Aorta (tissue), 5 donors: ENCODE measurements at regions of chr6 and their contacts with region 1.

Region 1: DNA sequence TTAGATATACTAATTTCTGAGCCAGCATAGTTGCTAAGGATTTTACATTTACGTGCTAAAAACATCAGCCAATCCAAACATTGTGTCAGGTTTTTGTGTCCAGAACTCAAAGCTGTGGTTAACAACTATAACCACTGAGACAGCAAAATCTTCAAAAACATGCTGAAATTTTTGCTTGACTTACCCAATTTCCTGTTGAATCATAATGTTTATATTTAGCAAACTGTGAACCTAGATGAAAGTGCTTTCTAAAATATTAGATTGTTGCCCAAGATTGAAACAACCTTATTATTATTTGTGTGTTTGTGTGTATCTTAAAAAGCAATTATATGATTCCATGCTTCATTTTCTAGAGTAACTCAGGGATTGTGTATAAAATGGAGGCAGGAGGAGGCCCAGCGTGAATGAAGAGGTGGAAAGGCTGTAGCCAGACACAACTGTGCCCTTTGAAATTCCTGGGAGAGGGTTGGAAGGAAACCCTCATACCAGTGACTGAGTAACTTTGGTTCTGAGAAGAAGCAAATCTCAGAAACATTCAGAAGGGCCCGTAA is 48.0 kb downstream of the ARMC2 start:
- DNase-seq: no peak
- ATAC-seq: peak; percentile 69
- H3K4me3 ChIP-seq: no peak overlapping the region
- H3K27ac ChIP-seq: peak overlapping the region; percentile 64 to 70
- H3K4me1 ChIP-seq: no peaks in the 10 kb centered on the region
- H3K27me3 ChIP-seq: no peaks in the 10 kb centered on the region

Region 2: GRCh38 chr6:108541838-108542759 is 354.1 kb before region 1 on chr6:
- intact Hi-C with region 1: loop called (anchors 2 to 5 kb)
- DNase-seq: peak in 1 of 2 donors; percentile 80
- ATAC-seq: peak; percentile 82
- H3K4me3 ChIP-seq: no peak overlapping the region
- H3K27ac ChIP-seq: no peak overlapping the region
- H3K4me1 ChIP-seq: no peaks in the 10 kb centered on the region
- H3K27me3 ChIP-seq: no peaks in the 10 kb centered on the region

Region 3: DNA sequence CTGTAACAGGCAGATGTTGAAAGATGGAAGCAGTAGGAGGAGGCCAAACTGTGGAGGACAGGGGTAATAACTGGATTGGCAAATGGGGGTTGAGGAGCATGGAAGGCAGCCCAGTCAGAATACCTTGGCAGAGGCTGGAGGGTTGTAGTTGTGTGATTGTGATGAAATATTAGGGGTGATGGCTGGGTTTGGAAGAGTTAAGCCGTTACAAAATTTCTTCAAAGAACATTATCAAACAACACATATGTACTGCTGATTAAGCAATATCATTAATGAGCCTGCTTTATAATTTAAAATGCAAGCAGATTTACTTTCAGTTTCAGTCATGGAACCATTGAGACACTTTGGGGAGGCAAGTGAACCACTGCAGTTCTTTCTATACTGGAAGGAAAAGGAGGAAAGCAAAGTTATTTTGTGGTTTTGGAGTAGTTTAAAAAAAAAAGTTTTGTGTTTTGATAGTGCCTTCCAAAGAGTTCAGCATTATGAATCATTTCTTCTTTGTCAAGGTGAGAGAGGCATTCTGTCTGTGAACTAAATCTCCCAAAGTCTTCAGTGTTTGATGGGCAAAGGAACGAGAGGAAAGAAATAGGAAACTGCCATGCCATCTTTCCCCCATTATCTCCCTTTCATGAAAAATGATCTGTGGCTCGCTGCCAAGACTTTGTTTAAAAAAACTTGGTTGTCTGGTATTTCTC is 314.8 kb before region 1 on chr6:
- intact Hi-C with region 1: no loop called
- DNase-seq: no peak
- ATAC-seq: peak; percentile 72
- H3K4me3 ChIP-seq: peak overlapping the region in 1 of 2 donors; percentile 14
- H3K27ac ChIP-seq: peak overlapping the region; percentile 67 to 79
- H3K4me1 ChIP-seq: peaks cover 17 to 48% of the 10 kb centered on the region in 2 donors
- H3K27me3 ChIP-seq: no peaks in the 10 kb centered on the region

Region 4: DNA sequence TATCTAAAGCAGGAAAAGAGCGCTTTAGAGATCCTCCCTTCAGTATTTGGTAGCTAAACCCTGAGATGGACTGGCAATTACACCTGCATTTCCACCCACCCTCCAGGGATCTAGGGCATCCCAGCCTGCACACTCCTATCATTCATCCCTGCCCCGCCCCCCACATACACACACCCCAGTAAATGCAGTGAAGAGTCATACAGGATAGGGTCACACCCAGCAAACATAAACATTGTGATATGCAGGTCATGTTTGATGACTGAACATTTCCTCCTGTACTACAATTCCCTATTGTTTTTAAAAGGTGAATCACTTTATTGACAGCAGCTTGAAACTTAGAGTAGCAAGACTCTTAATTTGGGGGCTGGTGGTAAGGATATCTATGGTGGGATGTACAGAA is 222.6 kb before region 1 on chr6:
- intact Hi-C with region 1: no loop called
- DNase-seq: no peak
- ATAC-seq: no peak
- H3K4me3 ChIP-seq: no peak overlapping the region
- H3K27ac ChIP-seq: no peak overlapping the region
- H3K4me1 ChIP-seq: peaks cover 5 to 24% of the 10 kb centered on the region in 2 donors
- H3K27me3 ChIP-seq: no peaks in the 10 kb centered on the region

Region 5: GRCh38 chr6:108764580-108764950 is 131.6 kb before region 1 on chr6:
- intact Hi-C with region 1: no loop called
- DNase-seq: no peak
- ATAC-seq: no peak
- H3K4me3 ChIP-seq: no peak overlapping the region
- H3K27ac ChIP-seq: no peak overlapping the region
- H3K4me1 ChIP-seq: no peaks in the 10 kb centered on the region
- H3K27me3 ChIP-seq: no peaks in the 10 kb centered on the region

Region 6: DNA sequence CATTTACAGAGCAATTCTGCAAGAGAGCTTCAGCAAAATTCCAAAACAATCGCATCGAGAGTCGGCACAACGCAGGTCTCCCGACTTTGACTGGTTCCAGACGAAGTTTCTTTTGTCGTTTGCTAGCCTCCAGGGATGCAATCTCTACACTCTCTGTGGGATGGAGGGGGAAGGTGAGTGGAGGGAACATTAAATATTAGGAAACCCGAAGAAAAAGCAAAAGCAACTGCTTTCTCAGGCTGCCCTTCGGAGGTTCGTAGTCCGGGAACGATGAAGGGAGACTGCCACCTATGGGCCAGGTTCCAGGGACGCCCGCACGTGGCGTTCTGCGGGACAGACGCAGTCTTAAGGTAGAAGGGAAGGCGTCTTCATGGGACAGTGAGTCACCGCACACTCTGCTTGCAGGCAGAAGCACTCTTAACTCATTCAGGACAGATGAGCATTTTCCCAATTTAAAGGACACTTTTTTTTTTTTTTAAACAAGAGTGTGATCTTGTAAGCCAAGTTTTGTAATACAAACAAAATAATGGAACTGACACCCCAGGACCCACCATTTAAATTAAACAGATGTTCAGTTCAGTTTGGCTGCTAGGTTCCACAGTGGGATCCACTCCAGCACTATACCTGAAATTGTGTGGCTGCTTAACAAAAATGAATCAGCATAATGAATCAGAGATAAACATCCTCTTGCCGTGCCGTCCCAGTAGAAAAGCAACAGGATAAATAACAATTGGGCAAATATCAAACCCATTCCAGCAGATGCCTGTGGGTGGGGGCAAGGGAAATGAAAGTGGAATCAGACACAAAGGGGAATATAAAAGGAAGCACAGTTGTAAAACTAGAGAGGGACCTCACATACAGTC is 113.8 kb before region 1 on chr6:
- intact Hi-C with region 1: loop called in 1 of 2 experiments (anchors 10 kb)
- DNase-seq: peak; percentile 88 to 93
- ATAC-seq: peak; percentile 91
- H3K4me3 ChIP-seq: no peak overlapping the region
- H3K27ac ChIP-seq: no peak overlapping the region
- H3K4me1 ChIP-seq: no peaks in the 10 kb centered on the region
- H3K27me3 ChIP-seq: no peaks in the 10 kb centered on the region

Region 7: DNA sequence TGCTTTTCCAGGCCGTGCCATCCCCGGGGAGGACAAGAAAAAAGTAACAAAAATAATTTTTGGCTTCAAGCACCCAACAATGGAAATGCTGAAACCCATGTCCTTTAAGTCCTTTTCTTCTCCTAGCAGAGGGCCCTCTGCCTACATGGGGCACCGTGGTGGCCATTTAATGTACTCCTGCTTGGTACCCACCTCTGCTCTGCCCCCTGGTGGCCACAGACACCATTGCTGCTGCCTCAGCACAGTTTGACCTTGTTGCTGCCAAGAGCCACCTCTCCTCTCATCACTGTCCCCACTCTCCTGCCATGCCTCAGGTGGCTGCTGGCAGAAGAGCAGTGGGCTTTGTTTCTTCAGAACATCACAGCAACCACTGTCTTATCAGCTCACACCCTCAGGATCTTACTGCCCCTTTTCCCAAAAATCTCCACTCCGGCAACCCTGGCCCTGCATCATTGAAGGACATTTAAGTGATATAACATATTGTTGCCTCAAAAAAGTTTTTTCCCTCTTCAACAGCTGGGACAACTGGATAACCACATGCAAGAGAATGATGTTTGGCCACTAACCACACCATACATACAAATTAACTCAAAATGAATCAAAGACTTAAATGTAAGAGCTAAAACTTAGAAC is 60.9 kb before region 1 on chr6:
- intact Hi-C with region 1: loop called in 1 of 2 experiments (anchors 5 kb)
- DNase-seq: peak; percentile 91 to 96
- ATAC-seq: peak; percentile 93
- H3K4me3 ChIP-seq: no peak overlapping the region
- H3K27ac ChIP-seq: peak overlapping the region in 1 of 2 donors; percentile 54
- H3K4me1 ChIP-seq: peaks cover 0 to 1% of the 10 kb centered on the region in 2 donors
- H3K27me3 ChIP-seq: no peaks in the 10 kb centered on the region

Region 8: DNA sequence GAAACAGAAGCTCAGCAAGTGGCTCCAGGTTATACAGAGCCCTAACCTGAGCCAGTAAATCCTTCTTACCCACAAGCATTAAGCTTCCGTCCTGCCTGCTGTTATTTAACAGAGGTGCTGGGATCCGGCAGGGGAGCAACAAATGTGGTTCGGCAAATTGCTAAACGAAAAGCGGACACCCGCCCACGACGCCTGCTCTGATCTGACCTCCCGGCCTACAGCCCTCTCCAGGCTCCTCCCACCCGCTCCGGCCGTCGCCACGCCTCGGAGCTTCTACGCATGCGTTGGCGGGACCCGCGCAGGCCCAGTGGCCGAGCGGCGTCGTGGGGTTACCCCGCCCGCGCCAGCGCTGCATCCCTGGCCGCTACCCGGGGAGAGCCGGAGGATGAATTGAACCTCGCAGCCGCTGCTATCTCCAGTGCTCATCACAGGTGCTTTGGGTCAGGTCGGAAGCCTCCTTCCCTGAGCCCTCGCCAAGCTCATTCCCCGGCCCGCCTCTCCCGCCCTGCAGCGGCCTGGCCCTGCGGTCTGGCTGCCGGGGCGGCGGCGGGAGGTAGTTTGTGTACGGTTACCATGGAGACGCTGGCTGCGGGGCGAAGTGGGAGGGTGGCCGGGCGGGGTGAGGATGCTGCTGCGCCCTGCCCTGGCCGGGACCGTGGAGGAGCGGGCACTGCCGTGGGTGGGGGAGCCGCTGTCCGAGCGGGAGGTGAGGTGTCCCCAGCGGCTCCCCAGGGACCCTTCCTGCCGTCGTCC is 47.9 kb before region 1 on chr6 and contains the start of gene ARMC2:
- intact Hi-C with region 1: loop called in 1 of 2 experiments (anchors 5 kb)
- DNase-seq: peak; percentile 95 to 99
- ATAC-seq: peak; percentile 99
- H3K4me3 ChIP-seq: peak within 1 kb of the TSS; percentile 36 to 83
- H3K27ac ChIP-seq: peak within 1 kb of the TSS in 1 of 2 donors; percentile 14
- H3K4me1 ChIP-seq: no peaks in the 10 kb centered on the region
- H3K27me3 ChIP-seq: no peaks in the 10 kb centered on the region
- total RNA-seq, gene ARMC2: 12.3 to 20.7 TPM

Region 9: GRCh38 chr6:108947114-108947854 is 51.1 kb after region 1 on chr6:
- intact Hi-C with region 1: loop called in 1 of 2 experiments (anchors 5 kb)
- DNase-seq: no peak
- ATAC-seq: peak; percentile 49
- H3K4me3 ChIP-seq: no peak overlapping the region
- H3K27ac ChIP-seq: peak overlapping the region; percentile 94 to 97
- H3K4me1 ChIP-seq: peaks cover 9 to 11% of the 10 kb centered on the region in 2 donors
- H3K27me3 ChIP-seq: no peaks in the 10 kb centered on the region

Region 10: DNA sequence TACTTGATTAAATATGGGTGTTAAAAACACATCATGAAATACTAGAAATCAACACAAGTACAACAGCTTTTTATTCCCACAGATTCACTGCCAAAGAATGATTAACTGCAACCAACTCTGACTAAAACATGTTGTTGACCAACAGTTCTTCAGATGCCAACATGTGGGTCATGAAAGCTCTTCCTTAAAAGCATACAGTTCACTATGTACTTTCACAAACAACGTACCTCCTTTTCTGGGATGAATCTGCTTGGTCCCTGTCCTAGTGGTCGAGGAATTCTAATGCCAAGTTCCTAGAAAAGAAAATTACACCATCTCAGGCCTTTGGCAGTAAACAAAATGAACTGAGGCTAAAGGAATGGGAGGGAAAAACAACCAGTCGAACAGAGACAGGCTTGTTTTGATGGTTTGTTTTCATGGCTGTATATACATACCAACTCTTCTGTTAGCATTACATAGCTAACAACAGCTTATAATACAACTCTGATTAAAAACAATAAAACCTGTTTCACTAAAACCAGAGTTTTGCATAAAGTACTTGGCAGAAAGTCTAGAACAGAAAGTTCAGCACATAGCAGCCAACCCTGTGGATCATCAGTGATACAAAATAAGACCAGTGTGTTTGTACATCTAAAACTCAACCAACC is 106.0 kb after region 1 on chr6:
- intact Hi-C with region 1: loop called in 1 of 2 experiments (anchors 5 kb)
- DNase-seq: no peak
- ATAC-seq: peak; percentile 76
- H3K4me3 ChIP-seq: no peak overlapping the region
- H3K27ac ChIP-seq: peak overlapping the region in 1 of 2 donors; percentile 18
- H3K4me1 ChIP-seq: peaks cover 0 to 1% of the 10 kb centered on the region in 2 donors
- H3K27me3 ChIP-seq: no peaks in the 10 kb centered on the region